ENCODE measurements at regions of chr7 and their contacts with region 1.

Region 1: GRCh38 chr7:139109188-139109982 is at the start of gene ZC3HAV1:
- DNase-seq: peak; percentile 81 to 96 (median 91)
- H3K4me3 ChIP-seq: peak within 1 kb of the TSS; percentile 66 to 94 (median 84)
- H3K27ac ChIP-seq: peak within 1 kb of the TSS; percentile 89 to 99 (median 94)
- H3K4me1 ChIP-seq: peaks cover 7 to 30% of the 10 kb centered on the region in 2 donors
- H3K27me3 ChIP-seq: no peaks in the 10 kb centered on the region
- CTCF ChIP-seq: peak in 3 of 6 experiments; percentile 10 to 36 (median 30)
- POLR2A ChIP-seq: peak; percentile 78 to 91
- total RNA-seq, gene ZC3HAV1: 28.8 to 50.8 (median 39.1) TPM

Region 2: DNA sequence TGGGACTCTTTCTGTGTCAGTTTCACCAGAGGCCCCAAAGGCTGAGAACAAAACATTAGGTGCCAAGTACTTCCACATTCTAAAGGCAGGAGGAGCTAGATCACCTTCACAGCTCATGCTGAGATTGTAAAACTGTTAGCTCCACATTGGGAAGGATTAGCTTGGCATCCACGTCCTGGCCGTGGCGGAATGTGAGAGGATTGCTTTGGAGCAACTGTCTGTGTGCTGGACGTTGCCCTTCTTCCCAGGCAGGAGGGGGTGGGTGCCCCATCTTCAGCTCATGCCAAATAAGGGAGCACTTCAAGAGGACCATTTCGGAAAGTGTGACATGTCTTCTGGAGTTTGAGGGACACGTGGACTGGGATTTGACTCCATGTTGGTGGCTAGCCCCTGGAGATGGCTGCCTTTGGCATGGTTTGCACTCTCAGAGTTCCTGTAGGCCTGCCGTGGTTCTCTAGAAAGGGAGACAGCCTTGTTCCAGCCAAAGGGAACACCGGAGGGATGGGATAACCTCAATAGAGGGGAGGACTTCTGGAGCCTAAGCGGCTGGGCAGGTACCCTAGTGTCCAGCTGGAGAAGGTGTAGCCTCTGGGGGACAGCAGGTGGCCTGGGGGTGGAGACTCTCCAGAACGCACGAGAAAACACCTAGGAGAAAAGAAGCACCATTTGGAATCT is 211.8 kb after region 1 on chr7:
- intact Hi-C with region 1: loop called in 1 of 2 experiments (anchors 10 kb)
- DNase-seq: peak in 1 of 7 donors; percentile 40
- H3K4me3 ChIP-seq: no peak overlapping the region
- H3K27ac ChIP-seq: peak overlapping the region in 2 of 5 donors; percentile 15 to 28
- H3K4me1 ChIP-seq: peaks cover 0 to 21% of the 10 kb centered on the region in 2 donors
- H3K27me3 ChIP-seq: no peaks in the 10 kb centered on the region
- CTCF ChIP-seq: peak in 1 of 6 experiments; percentile 37
- POLR2A ChIP-seq: no peak